Dendritic cell treated with granulocyte-macrophage colony-stimulating factor and Interleukin-4, amounts not matched to agents 40 ng/mL and 50 ng/mL, for 4 days (primary cell): ENCODE measurements at regions of chr6 and their contacts with region 1.

Region 1: GRCh38 chr6:20534295-20535262 is at the start of gene CDKAL1:
- H3K4me3 Mint-ChIP-seq: peak within 1 kb of the TSS; percentile 92
- H3K27ac Mint-ChIP-seq: peak within 1 kb of the TSS; percentile 94
- H3K4me1 Mint-ChIP-seq: peaks cover 36% of the 10 kb centered on the region
- H3K27me3 Mint-ChIP-seq: no peaks in the 10 kb centered on the region

Region 2: DNA sequence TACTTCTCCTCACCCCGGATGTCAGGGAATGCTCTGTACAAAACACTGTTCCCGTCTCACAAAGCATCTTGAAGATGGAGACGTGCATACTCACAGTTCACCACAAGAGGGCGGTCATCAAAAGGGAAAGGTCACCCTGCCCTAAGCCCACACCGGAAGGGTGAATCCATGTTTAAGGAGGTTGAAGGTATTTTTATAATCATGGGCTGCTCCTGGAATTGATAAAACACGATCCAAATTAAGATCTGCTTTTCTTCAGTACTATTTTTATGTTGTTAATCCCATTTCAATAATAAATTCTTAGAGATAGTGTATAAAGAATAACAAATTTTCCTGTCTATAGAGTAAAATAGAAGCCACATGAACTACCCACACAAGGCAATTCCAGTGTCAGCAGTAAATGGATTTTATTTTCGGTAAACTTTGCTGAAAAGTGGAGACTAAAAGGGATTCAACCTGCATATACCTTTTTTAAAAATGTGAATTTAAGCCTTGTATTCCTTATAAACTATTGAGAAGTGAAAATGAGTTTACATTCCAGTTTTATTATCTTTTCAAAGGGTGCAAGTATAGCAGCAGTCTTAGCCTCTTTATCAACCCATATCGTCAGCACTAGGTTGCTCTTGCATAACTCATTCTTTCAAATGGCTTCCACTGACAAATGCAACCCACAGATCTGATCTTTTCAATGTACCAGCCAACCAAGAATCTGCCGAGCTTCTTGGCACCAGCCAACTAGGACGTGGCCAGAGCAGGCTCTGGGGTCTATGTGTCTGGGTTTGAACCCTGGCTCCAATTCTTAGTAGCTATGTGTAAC is 242.6 kb before region 1 on chr6:
- intact Hi-C with region 1: loop called (anchors 1 kb)
- H3K4me3 Mint-ChIP-seq: no peak overlapping the region
- H3K27ac Mint-ChIP-seq: no peak overlapping the region
- H3K4me1 Mint-ChIP-seq: no peaks in the 10 kb centered on the region
- H3K27me3 Mint-ChIP-seq: no peaks in the 10 kb centered on the region

Region 3: GRCh38 chr6:20334334-20334733 is 200.2 kb before region 1 on chr6:
- intact Hi-C with region 1: no loop called
- H3K4me3 Mint-ChIP-seq: no peak overlapping the region
- H3K27ac Mint-ChIP-seq: no peak overlapping the region
- H3K4me1 Mint-ChIP-seq: peaks cover 6% of the 10 kb centered on the region
- H3K27me3 Mint-ChIP-seq: peaks cover 8% of the 10 kb centered on the region

Region 4: DNA sequence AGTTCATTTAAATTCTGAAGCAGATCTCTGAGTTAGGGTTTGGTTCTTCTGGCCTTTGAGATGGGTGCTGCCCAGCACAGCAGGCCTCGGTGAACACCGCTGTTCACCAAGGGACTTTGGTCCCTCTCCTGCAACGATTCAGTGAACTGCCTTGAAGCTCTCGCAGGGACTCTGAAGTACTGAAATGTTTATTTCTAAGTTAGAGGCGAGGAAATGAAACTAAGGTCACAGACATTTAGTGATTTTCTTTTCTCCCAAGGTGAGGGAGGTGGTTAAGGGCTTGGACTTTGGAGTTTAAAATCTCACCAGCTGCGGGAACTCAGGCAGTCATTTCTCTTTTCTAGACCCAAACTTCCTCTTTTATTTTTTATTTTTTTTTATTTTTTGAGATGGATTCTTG is 106.7 kb before region 1 on chr6:
- intact Hi-C with region 1: no loop called
- H3K4me3 Mint-ChIP-seq: no peak overlapping the region
- H3K27ac Mint-ChIP-seq: peak overlapping the region; percentile 70
- H3K4me1 Mint-ChIP-seq: peaks cover 46% of the 10 kb centered on the region
- H3K27me3 Mint-ChIP-seq: no peaks in the 10 kb centered on the region